ENCODE measurements at regions of chr4 and their contacts with region 1.

Region 1: GRCh38 chr4:337143-337931 is at the start of gene ZNF141:
- DNase-seq: peak; percentile 97
- ATAC-seq: peak; percentile 90
- H3K4me3 ChIP-seq: peak within 1 kb of the TSS; percentile 61 to 90 (median 82)
- H3K4me3 Mint-ChIP-seq: peak within 1 kb of the TSS; percentile 100
- H3K27ac ChIP-seq: peak within 1 kb of the TSS; percentile 91 to 95
- H3K27ac Mint-ChIP-seq: peak within 1 kb of the TSS; percentile 100
- H3K4me1 ChIP-seq: peaks cover 16 to 22% of the 10 kb centered on the region in 2 donors
- H3K4me1 Mint-ChIP-seq: peaks cover 41% of the 10 kb centered on the region
- H3K27me3 ChIP-seq: no peaks in the 10 kb centered on the region
- H3K27me3 Mint-ChIP-seq: no peaks in the 10 kb centered on the region
- CTCF ChIP-seq: no peak
- total RNA-seq, gene ZNF141: 68.1 and 73.0 TPM in 2 replicates

Region 2: DNA sequence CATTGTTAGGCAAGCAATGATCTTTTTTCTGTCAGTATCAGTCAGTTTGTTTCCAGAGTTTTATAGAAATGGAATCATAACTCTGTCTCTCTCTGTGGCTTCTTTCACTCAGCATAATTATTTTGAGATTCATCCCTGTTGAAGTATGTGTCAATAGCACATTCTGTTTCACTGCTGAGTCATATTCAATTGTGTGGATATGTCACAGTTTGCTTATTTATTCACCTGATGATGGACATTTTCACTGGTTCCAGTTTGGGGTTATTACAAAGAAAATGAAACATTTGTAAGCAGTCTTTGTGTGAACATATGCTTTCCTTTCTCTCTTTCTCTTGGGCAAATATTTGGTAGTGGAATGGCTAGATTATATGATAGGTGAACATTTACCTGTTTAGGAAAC is 223.2 kb before region 1 on chr4:
- CTCF ChIA-PET with region 1: no interaction called
- POLR2A ChIA-PET with region 1: no interaction called
- intact Hi-C with region 1: no loop called
- DNase-seq: no peak
- ATAC-seq: no peak
- H3K4me3 ChIP-seq: no peak overlapping the region
- H3K4me3 Mint-ChIP-seq: no peak overlapping the region
- H3K27ac ChIP-seq: no peak overlapping the region
- H3K27ac Mint-ChIP-seq: no peak overlapping the region
- H3K4me1 ChIP-seq: no peaks in the 10 kb centered on the region
- H3K4me1 Mint-ChIP-seq: peaks cover 6% of the 10 kb centered on the region
- H3K27me3 ChIP-seq: peaks cover 0 to 8% (median 3%) of the 10 kb centered on the region in 4 experiments
- H3K27me3 Mint-ChIP-seq: peaks cover 21% of the 10 kb centered on the region
- CTCF ChIP-seq: no peak

Region 3: GRCh38 chr4:242121-242848 is 95.1 kb before region 1 on chr4:
- CTCF ChIA-PET with region 1: interaction called, 3 read pairs
- POLR2A ChIA-PET with region 1: no interaction called
- intact Hi-C with region 1: loop called (anchors 2 kb)
- DNase-seq: peak; percentile 87
- ATAC-seq: peak; percentile 95
- H3K4me3 ChIP-seq: peak overlapping the region in 4 of 5 experiments; percentile 40 to 72 (median 50)
- H3K4me3 Mint-ChIP-seq: peak overlapping the region; percentile 92
- H3K27ac ChIP-seq: peak overlapping the region; percentile 57 to 70
- H3K27ac Mint-ChIP-seq: peak overlapping the region; percentile 92
- H3K4me1 ChIP-seq: peaks cover 5 to 13% of the 10 kb centered on the region in 2 donors
- H3K4me1 Mint-ChIP-seq: peaks cover 13% of the 10 kb centered on the region
- H3K27me3 ChIP-seq: no peaks in the 10 kb centered on the region
- H3K27me3 Mint-ChIP-seq: no peaks in the 10 kb centered on the region
- CTCF ChIP-seq: peak; percentile 88

Region 4: DNA sequence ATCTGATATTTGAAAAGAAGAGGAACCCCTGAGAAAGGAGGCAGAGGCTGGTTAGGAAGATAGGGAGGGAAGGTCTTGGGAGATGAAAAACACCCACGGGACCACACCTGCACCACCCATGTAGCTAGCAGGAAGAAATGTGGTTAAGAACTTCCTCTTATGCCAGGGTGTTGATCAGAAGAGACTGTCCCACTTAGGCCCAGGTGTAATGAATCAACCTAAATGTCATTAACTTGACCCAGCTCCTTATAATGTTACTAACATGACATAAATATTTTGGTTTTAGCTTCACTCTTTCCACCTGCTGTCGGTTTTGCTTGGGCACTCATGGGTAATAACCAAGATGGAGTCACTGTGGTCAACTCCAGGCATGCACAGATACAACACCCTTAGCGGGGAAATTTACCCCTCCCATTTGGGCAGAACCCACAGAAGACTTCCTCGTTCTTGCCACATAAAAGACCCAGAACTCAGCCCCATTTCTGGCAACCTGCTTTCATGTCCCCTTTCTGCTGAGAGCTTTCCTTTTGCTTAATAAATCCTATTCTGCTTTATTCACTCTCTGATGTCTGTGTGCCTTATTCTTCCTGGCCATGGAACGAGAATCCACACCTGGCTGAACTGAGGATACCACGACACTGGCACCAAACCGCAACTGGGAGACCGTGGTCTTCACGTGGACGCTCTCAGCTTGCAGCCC is 47.1 kb after region 1 on chr4:
- CTCF ChIA-PET with region 1: no interaction called
- POLR2A ChIA-PET with region 1: no interaction called
- intact Hi-C with region 1: no loop called
- DNase-seq: peak; percentile 27
- ATAC-seq: no peak
- H3K4me3 ChIP-seq: peak overlapping the region in 1 of 5 experiments; percentile 25
- H3K4me3 Mint-ChIP-seq: no peak overlapping the region
- H3K27ac ChIP-seq: no peak overlapping the region
- H3K27ac Mint-ChIP-seq: no peak overlapping the region
- H3K4me1 ChIP-seq: peaks cover 6 to 8% of the 10 kb centered on the region in 2 donors
- H3K4me1 Mint-ChIP-seq: peaks cover 9% of the 10 kb centered on the region
- H3K27me3 ChIP-seq: no peaks in the 10 kb centered on the region
- H3K27me3 Mint-ChIP-seq: no peaks in the 10 kb centered on the region
- CTCF ChIP-seq: no peak

Region 5: GRCh38 chr4:498328-498904 is 161.1 kb after region 1 on chr4:
- CTCF ChIA-PET with region 1: no interaction called
- POLR2A ChIA-PET with region 1: no interaction called
- intact Hi-C with region 1: loop called (anchors 1 kb)
- DNase-seq: peak; percentile 55
- ATAC-seq: peak; percentile 4
- H3K4me3 ChIP-seq: peak overlapping the region; percentile 62 to 87 (median 82)
- H3K4me3 Mint-ChIP-seq: peak overlapping the region; percentile 92
- H3K27ac ChIP-seq: peak overlapping the region; percentile 92 to 96
- H3K27ac Mint-ChIP-seq: peak overlapping the region; percentile 97
- H3K4me1 ChIP-seq: peaks cover 11 to 16% of the 10 kb centered on the region in 2 donors
- H3K4me1 Mint-ChIP-seq: peaks cover 26% of the 10 kb centered on the region
- H3K27me3 ChIP-seq: no peaks in the 10 kb centered on the region
- H3K27me3 Mint-ChIP-seq: no peaks in the 10 kb centered on the region
- CTCF ChIP-seq: no peak

Region 6: DNA sequence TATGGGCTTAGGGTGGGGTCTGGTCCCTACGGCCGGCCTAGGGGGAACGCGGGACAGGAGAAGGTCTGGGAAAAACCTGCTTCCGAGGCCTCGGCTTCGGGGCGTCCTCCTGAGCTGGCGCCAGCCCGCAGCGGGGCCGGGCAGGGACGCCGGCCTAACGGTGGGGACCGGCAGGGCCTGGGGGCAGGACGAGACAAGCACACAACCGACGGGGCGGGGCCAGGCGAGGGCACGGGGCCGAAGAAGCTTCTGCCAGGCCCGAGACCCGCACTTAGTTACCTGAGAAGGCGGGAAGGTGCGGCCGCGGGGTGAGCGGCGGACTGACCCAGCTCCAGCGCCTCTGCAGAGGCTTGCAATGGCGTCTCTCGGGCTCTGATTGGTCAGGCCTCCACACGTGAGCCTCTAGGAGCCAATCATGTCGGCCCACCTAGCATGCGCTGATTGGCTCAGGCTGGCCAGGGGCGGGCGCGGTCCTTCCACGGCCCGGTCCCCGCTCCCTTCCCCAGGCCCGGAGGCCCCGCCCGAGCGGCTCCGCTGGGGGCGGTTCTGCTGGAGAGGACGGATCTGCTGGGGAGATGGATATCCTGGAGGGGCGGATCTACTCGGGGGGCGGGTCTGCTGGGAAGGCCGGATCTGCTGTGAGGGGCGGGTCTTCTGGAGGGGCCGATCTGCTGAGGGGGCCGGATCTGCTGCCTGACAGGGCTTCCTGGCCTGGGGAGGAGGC is 444.3 kb after region 1 on chr4:
- CTCF ChIA-PET with region 1: no interaction called
- POLR2A ChIA-PET with region 1: no interaction called
- intact Hi-C with region 1: loop called (anchors 5 kb)
- DNase-seq: peak; percentile 99
- ATAC-seq: peak; percentile 94
- H3K4me3 ChIP-seq: peak overlapping the region; percentile 23 to 97 (median 85)
- H3K4me3 Mint-ChIP-seq: peak overlapping the region; percentile 94
- H3K27ac ChIP-seq: peak overlapping the region; percentile 82 to 95
- H3K27ac Mint-ChIP-seq: peak overlapping the region; percentile 91
- H3K4me1 ChIP-seq: peaks cover 38 to 40% of the 10 kb centered on the region in 2 donors
- H3K4me1 Mint-ChIP-seq: peaks cover 48% of the 10 kb centered on the region
- H3K27me3 ChIP-seq: peaks cover 0 to 26% (median 11%) of the 10 kb centered on the region in 4 experiments
- H3K27me3 Mint-ChIP-seq: peaks cover 18% of the 10 kb centered on the region
- CTCF ChIP-seq: no peak

Measured in B cell (primary cell).